HepG2 (cell line): ENCODE measurements at regions of chr11 and their contacts with region 1.

Region 1: DNA sequence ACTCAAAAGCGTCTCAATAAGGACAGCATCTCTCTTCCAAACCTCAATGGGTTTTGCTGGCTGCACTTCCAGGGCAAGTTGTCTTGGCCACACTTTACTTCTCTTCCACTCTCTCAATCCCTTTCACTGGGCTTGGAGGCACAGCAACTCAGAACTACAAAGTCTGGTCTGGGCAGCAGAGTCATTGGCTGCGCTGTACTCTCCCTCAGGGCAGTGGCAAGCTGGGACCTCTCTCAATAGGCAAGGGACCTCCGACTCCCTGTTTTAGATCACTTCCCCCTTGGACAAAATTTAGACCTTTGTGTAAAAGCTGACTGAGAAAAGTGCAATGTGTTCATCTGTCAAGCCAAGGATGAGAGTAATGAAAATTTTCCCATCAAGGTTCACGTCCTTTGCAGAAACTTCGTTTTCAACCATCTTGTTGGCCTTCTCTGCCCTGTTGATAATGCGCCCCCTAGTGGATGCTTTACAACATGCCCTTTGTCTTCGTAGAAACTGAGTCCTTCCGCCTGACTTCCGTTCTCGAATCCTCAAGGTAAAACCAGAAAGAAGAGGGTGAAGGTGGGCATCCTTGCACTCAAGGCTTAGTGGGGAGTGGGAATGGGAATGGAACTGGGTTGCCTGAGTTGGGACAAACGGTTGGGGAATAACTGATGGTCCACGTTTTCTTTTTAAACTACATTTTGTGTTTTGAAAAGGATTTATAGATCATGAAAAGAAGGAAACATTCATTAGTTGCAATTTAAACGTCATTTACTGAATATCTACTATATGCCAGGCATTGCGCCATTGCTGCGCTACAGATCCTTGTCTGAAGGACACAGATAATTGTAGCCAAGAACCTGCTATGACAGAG is 99.1 kb downstream of the CD44 start:
- DNase-seq: peak; percentile 47
- ATAC-seq: peak; percentile 59
- H3K4me3 ChIP-seq: no peak overlapping the region
- H3K27ac ChIP-seq: no peak overlapping the region
- H3K4me1 ChIP-seq: peaks cover 12% of the 10 kb centered on the region; the same call in 1 of the 2 replicates
- H3K27me3 ChIP-seq: no peaks in the 10 kb centered on the region
- CTCF ChIP-seq: peak; percentile 82
- EP300 ChIP-seq: no peak
- POLR2A ChIP-seq: no peak
- RAD21 ChIP-seq: peak; percentile 50

Region 2: DNA sequence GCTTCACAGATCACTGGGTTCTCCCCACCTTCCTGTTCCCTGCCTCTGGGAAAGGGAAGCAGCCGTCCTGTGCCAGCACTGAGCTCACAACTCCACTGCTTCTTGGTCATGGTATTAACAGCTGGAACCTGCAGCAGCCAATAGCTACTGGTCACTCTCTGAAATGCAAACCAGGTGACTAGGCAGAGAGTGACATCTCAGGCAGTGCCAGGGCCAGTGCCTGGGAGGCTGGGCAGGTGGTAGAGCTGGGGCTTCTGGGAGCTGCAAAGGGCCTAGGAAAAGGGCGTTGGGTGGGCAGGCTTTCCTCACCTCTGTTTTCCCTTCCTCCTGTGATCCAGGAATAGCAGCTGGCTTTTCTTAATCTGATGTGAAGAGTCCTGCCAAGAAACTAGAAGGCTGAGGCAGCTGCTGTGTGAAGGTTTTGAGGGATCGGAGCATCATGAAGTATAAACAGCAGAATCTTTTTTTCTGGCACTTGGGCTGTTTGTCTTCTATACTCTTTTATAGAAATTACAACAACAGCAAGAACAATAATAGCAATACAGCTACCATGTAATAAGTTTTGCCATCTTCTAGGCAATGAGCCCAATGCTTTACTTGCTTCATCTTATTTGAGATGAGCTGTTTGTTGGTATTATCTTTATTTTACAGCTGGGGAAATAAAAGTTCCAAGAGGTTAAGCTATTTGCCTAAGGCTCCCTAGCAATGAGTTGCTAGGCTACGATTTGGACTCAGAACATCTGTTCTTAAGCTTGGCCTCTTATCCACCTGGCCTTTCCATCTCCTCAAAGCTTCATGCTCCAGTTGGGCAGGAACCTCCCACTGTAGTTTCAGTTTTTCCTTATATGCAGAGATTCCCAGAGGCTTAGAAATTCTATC is 121.1 kb before region 1 on chr11:
- CTCF ChIA-PET with region 1: no interaction called
- POLR2A ChIA-PET with region 1: no interaction called
- in situ Hi-C with region 1: no loop called
- intact Hi-C with region 1: no loop called
- DNase-seq: no peak
- ATAC-seq: no peak
- H3K4me3 ChIP-seq: no peak overlapping the region
- H3K27ac ChIP-seq: no peak overlapping the region
- H3K4me1 ChIP-seq: no peaks in the 10 kb centered on the region
- H3K27me3 ChIP-seq: peaks cover 0 to 4% of the 10 kb centered on the region in 2 experiments; a peak in 2 of 5 replicates
- CTCF ChIP-seq: no peak
- EP300 ChIP-seq: no peak
- POLR2A ChIP-seq: no peak
- RAD21 ChIP-seq: no peak

Region 3: DNA sequence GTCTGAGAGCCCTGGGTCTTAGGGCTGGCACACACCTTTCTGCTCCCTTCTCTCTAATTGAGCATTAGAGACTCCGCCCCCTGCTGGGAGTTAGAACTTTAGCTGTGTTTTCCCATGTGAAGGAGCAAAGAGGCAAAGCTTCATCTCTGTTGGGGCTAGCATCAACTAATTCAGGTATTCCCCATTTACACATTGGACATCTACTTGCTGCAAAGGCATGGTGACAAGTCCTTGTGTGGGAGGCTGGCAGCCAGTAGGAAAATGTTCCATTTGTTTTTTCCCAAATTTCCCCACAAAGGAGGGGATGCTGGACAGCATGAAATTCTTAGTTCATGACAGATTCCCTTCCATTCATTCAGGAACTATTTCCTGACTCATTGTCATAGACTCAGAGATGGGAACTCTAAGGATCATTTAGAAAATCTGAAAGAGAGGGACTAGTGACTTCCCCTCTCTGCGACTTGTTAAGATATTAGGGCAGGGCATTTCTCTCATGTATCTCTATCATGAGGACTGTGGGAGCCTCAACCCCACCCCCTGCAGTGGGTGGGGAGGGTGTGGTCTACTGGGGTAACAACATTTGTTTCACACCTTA is 95.5 kb before region 1 on chr11:
- CTCF ChIA-PET with region 1: no interaction called
- POLR2A ChIA-PET with region 1: no interaction called
- in situ Hi-C with region 1: no loop called
- intact Hi-C with region 1: loop called (anchors 1 kb)
- DNase-seq: peak; percentile 20
- ATAC-seq: no peak; the same call in 2 of the 3 replicates
- H3K4me3 ChIP-seq: no peak overlapping the region
- H3K27ac ChIP-seq: no peak overlapping the region
- H3K4me1 ChIP-seq: no peaks in the 10 kb centered on the region
- H3K27me3 ChIP-seq: peaks cover 4 to 33% of the 10 kb centered on the region in 2 experiments; a peak in 3 of 5 replicates
- CTCF ChIP-seq: peak; percentile 34; the same call in 1 of the 2 replicates
- EP300 ChIP-seq: no peak
- POLR2A ChIP-seq: no peak
- RAD21 ChIP-seq: no peak